Activated CD4-positive, alpha-beta T cell treated with anti-CD3 and anti-CD28 coated beads, Interleukin-2, amount 10 ng/mL, durations not matched to agents 24 days and 14 days (primary cell): ENCODE measurements at regions of chr15 and their contacts with region 1.

Region 1: GRCh38 chr15:73697033-73697467 is 12.9 kb downstream of the CD276 start:
- DNase-seq: peak; percentile 95
- H3K4me3 Mint-ChIP-seq: peak overlapping the region; percentile 54
- H3K27ac Mint-ChIP-seq: peak overlapping the region; percentile 63
- H3K4me1 Mint-ChIP-seq: peaks cover 45% of the 10 kb centered on the region
- H3K27me3 Mint-ChIP-seq: peaks cover 56% of the 10 kb centered on the region

Region 2: GRCh38 chr15:73081321-73081958 is 615.6 kb before region 1 on chr15:
- intact Hi-C with region 1: no loop called
- DNase-seq: peak; percentile 69
- H3K4me3 Mint-ChIP-seq: no peak overlapping the region
- H3K27ac Mint-ChIP-seq: no peak overlapping the region
- H3K4me1 Mint-ChIP-seq: no peaks in the 10 kb centered on the region
- H3K27me3 Mint-ChIP-seq: peaks cover 4% of the 10 kb centered on the region

Region 3: GRCh38 chr15:73240866-73241499 is 456.1 kb before region 1 on chr15:
- intact Hi-C with region 1: loop called (anchors 1 kb)
- DNase-seq: peak; percentile 92
- H3K4me3 Mint-ChIP-seq: no peak overlapping the region
- H3K27ac Mint-ChIP-seq: no peak overlapping the region
- H3K4me1 Mint-ChIP-seq: peaks cover 3% of the 10 kb centered on the region
- H3K27me3 Mint-ChIP-seq: peaks cover 1% of the 10 kb centered on the region

Region 4: DNA sequence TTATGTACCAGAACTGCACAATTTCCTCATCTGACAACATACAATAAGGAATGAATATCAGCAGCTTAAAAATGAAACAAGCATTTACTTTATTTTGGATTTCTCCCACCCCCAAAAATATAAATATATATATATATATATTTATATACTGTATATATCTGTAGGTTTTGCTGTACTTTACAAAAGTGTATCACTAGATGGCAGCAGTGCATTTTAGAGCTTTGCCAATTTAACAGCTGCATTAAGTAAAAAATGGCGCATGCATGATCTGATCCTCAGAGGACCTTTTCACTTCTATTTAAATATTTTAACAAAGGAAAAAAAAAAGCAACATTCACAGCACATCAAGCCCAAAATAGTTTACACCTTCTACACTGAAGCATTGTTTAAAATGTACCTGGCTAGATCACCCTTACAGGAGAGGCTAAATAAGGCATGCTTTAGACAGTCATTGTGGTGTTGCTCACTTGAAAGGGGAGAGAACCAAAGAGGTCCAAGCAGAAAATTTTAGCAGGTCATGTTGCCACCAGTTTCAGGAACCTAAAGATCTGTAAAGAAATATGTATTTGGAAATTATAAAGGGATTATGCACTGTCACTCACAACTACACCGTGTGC is 136.4 kb before region 1 on chr15:
- intact Hi-C with region 1: loop called (anchors 1 kb)
- DNase-seq: peak; percentile 76
- H3K4me3 Mint-ChIP-seq: no peak overlapping the region
- H3K27ac Mint-ChIP-seq: no peak overlapping the region
- H3K4me1 Mint-ChIP-seq: peaks cover 5% of the 10 kb centered on the region
- H3K27me3 Mint-ChIP-seq: no peaks in the 10 kb centered on the region

Region 5: GRCh38 chr15:73608941-73609340 is 88.1 kb before region 1 on chr15:
- intact Hi-C with region 1: no loop called
- DNase-seq: no peak
- H3K4me3 Mint-ChIP-seq: no peak overlapping the region
- H3K27ac Mint-ChIP-seq: no peak overlapping the region
- H3K4me1 Mint-ChIP-seq: peaks cover 30% of the 10 kb centered on the region
- H3K27me3 Mint-ChIP-seq: no peaks in the 10 kb centered on the region

Region 6: DNA sequence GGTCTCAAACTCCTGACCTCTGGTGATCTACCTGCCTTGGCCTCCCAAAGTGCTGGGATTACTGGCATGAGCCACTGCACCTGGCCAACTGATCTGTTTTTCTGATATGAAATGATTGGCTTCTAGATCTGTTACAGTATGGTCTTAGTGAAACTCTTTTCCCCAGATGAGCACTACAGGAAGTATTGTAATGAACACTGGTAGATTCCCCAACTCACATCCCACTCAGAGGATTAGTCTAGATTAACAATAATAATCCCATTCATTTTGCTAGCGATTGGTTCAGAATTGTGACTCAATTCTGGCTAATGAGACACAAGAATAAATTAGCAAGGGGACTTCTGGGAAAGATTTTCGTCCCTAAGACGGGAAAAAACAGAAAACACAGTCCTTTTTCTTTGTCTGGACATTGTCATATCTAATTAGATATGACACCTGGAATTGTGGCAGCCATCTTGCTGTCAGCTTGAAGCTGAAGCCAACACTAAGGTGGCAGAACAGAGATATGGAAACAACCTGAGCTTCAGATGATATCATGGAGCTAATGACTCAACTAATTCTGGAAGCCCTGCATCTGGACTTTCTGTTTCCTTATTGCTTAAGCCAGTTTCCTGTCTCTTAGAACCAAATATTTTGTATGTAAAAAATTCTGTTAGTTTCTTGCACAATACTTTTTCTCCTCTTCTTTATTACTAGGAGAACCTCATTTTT is 46.5 kb before region 1 on chr15:
- intact Hi-C with region 1: loop called (anchors 2 kb)
- DNase-seq: no peak
- H3K4me3 Mint-ChIP-seq: no peak overlapping the region
- H3K27ac Mint-ChIP-seq: peak overlapping the region; percentile 57
- H3K4me1 Mint-ChIP-seq: peaks cover 10% of the 10 kb centered on the region
- H3K27me3 Mint-ChIP-seq: peaks cover 10% of the 10 kb centered on the region

Region 7: DNA sequence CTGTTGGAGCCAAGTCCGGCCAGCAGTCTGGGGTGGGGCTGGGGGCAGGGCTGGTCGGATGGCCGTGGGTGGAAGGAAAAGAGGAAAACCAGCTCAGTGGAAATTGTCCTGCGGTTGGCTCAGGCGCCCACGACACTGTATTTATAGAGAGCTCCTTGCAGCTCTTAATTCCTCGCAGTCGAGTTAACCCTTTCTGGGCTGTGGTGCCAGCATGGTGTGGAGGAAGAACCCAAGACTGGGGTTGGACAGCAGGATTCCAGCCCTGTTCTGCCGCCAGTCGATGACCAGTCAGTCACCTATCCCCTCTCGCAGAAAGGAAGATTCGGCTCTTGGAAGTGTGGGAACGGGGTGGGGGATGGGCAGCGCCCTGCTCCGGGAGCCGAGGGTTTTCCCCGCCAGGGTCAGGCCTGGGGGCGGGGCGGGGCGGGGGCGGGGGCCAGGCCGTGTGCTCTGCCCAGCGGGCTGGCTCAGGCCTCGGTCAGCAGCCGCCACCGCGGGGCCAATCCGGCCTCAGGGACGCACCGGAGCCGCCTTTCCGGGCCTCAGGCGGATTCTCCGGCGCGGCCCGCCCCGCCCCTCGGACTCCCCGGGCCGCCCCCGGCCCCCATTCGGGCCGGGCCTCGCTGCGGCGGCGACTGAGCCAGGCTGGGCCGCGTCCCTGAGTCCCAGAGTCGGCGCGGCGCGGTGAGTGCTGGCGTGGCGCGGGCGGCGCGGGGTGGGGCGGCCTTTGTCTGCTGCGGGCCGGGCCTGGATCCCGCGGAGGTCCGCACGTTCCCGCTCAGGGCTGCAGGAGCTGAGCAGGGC is 13.1 kb before region 1 on chr15 and contains the start of gene CD276:
- intact Hi-C with region 1: loop called (anchors 2 kb)
- DNase-seq: no peak
- H3K4me3 Mint-ChIP-seq: peak within 1 kb of the TSS; percentile 84
- H3K27ac Mint-ChIP-seq: peak within 1 kb of the TSS; percentile 82
- H3K4me1 Mint-ChIP-seq: peaks cover 24% of the 10 kb centered on the region
- H3K27me3 Mint-ChIP-seq: peaks cover 53% of the 10 kb centered on the region
- total RNA-seq, gene CD276: 20.1 and 20.3 TPM in 2 replicates